Activated CD4-positive, alpha-beta memory T cell treated with anti-CD3 and anti-CD28 coated beads for 36 hours (primary cell): ENCODE measurements at regions of chr6 and their contacts with region 1.

Region 1: GRCh38 chr6:30556066-30556905 is at the start of gene GNL1:
- DNase-seq: peak; percentile 100
- H3K4me3 Mint-ChIP-seq: peak within 1 kb of the TSS; percentile 97
- H3K27ac Mint-ChIP-seq: peak within 1 kb of the TSS; percentile 98
- H3K4me1 Mint-ChIP-seq: peaks cover 44% of the 10 kb centered on the region
- H3K27me3 Mint-ChIP-seq: no peaks in the 10 kb centered on the region
- total RNA-seq, gene GNL1: 94.0 to 95.8 TPM

Region 2: GRCh38 chr6:30238174-30238795 is 318.0 kb before region 1 on chr6:
- CTCF ChIA-PET with region 1: no interaction called
- POLR2A ChIA-PET with region 1: no interaction called
- intact Hi-C with region 1: no loop called
- DNase-seq: peak; percentile 40
- H3K4me3 Mint-ChIP-seq: no peak overlapping the region
- H3K27ac Mint-ChIP-seq: no peak overlapping the region
- H3K4me1 Mint-ChIP-seq: no peaks in the 10 kb centered on the region
- H3K27me3 Mint-ChIP-seq: peaks cover 21% of the 10 kb centered on the region

Region 3: DNA sequence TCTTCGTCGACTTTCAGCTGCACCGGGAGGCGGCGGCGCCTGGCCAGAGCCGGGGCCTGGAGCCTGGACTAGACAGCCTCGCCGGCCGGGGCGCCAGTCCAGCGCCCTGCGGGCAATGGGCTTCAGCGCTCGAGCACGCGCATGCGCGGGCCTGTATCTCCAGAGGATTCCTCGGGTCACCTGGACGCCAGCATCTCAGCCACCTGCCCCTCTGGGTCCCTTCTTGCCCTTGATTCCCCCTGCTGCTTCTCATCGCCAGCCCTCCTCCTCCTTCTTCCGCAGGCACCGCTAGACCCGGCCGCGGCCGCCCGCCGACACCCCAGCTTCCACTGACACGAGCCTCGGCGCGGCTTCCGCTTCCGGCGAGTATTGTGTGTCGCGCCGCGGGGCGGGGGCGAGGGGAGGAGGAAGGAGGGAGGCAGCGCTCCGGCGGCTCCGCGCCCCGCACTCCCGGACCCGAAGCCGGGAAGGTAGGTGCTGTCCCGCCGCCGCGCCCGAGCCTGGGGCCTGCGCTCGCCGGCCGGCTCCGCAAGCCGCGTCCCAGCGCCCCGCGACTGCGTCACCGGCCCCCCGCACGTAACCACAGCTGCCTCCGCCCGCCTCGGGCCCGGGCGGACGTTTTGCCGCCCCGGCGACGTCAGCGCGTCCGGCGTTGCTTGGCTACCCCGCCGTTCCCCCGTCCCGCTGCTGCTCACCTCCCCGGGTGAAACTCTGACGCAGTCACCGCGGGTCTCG is 229.6 kb before region 1 on chr6 and contains the start of gene TRIM39:
- CTCF ChIA-PET with region 1: no interaction called
- POLR2A ChIA-PET with region 1: interaction called, 3 read pairs
- intact Hi-C with region 1: loop called (anchors 10 kb)
- DNase-seq: peak; percentile 90
- H3K4me3 Mint-ChIP-seq: peak within 1 kb of the TSS; percentile 93
- H3K27ac Mint-ChIP-seq: peak within 1 kb of the TSS; percentile 94
- H3K4me1 Mint-ChIP-seq: peaks cover 51% of the 10 kb centered on the region
- H3K27me3 Mint-ChIP-seq: no peaks in the 10 kb centered on the region
- total RNA-seq, gene TRIM39: 13.7 to 15.6 TPM

Region 4: GRCh38 chr6:30489081-30490025 is 66.9 kb before region 1 on chr6 and contains the start of gene HLA-E:
- CTCF ChIA-PET with region 1: interaction called, 12 read pairs
- POLR2A ChIA-PET with region 1: interaction called, 6 read pairs
- intact Hi-C with region 1: loop called (anchors 1 kb)
- DNase-seq: peak; percentile 93
- H3K4me3 Mint-ChIP-seq: peak within 1 kb of the TSS; percentile 99
- H3K27ac Mint-ChIP-seq: peak within 1 kb of the TSS; percentile 99
- H3K4me1 Mint-ChIP-seq: peaks cover 41% of the 10 kb centered on the region
- H3K27me3 Mint-ChIP-seq: peaks cover 2% of the 10 kb centered on the region
- total RNA-seq, gene HLA-E: 481 to 485 TPM

Region 5: GRCh38 chr6:30508890-30509736 is 47.2 kb before region 1 on chr6:
- CTCF ChIA-PET with region 1: no interaction called
- POLR2A ChIA-PET with region 1: no interaction called
- intact Hi-C with region 1: no loop called
- DNase-seq: peak; percentile 46
- H3K4me3 Mint-ChIP-seq: peak overlapping the region; percentile 31
- H3K27ac Mint-ChIP-seq: peak overlapping the region; percentile 86
- H3K4me1 Mint-ChIP-seq: peaks cover 55% of the 10 kb centered on the region
- H3K27me3 Mint-ChIP-seq: no peaks in the 10 kb centered on the region

Region 6: DNA sequence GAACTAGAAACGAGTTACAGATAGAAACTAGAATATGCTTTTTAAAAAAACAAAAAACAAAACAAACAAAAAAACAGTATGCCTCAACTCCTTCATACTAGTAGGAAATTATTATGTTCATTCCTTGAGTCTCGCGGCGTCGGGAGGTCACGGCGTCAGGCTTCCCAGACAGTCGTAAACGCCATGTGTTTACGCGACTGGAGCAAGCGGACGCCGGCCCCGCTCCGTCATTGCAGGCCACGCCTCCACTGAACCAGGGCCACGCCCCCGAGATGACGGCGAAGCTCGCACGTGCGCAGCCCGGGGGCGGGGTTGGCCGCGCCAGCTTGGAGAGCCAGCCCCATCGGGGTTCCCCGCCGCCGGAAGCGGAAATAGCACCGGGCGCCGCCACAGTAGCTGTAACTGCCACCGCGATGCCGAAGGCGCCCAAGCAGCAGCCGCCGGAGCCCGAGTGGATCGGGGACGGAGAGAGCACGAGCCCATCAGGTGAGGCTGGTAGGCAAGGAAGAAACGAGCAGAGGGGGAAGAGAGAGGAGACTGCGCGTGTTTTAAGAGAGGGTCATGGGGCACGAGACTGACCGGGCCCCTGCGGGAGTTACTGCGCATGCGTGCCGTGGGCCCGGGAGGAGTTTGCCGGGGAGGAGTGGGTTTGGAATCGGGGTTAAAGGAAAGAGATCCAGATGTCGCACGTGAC is 14.9 kb after region 1 on chr6 and contains the start of gene ABCF1:
- CTCF ChIA-PET with region 1: interaction called, 11 read pairs
- POLR2A ChIA-PET with region 1: interaction called, 28 read pairs
- intact Hi-C with region 1: loop called (anchors 1 kb)
- DNase-seq: peak; percentile 99
- H3K4me3 Mint-ChIP-seq: peak within 1 kb of the TSS; percentile 94
- H3K27ac Mint-ChIP-seq: peak within 1 kb of the TSS; percentile 94
- H3K4me1 Mint-ChIP-seq: peaks cover 60% of the 10 kb centered on the region
- H3K27me3 Mint-ChIP-seq: no peaks in the 10 kb centered on the region
- total RNA-seq, gene ABCF1: 87.0 to 87.1 TPM

Region 7: GRCh38 chr6:30678964-30679726 is 122.9 kb after region 1 on chr6:
- CTCF ChIA-PET with region 1: interaction called, 3 read pairs
- POLR2A ChIA-PET with region 1: no interaction called
- intact Hi-C with region 1: loop called (anchors 5 kb)
- DNase-seq: peak; percentile 94
- H3K4me3 Mint-ChIP-seq: peak overlapping the region; percentile 100
- H3K27ac Mint-ChIP-seq: peak overlapping the region; percentile 99
- H3K4me1 Mint-ChIP-seq: peaks cover 16% of the 10 kb centered on the region
- H3K27me3 Mint-ChIP-seq: no peaks in the 10 kb centered on the region